ENCODE measurements at regions of chr6 and their contacts with region 1.

Region 1: DNA sequence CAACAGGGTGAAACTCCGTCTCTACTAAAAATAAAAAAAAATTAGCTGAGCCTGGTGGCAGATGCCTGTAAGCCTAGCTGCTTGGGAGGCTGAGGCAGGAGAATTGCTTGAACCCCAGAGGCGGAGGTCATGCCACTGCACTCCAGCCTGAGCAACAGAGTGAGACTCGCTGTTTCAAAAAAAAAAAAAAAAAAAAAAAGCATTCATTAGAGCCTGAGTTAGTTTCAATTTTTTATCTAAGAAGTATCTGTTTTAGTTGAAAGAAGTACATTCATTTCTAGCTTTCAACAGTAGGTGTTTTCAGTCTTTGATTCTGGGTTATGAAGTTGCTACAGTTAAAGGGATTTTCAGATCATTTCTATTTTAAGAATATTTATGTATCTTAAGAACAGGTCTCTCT is 42.2 kb downstream of the ZNF292 start:
- DNase-seq: peak; percentile 28
- ATAC-seq: peak; percentile 64
- H3K4me3 Mint-ChIP-seq: no peak overlapping the region
- H3K27ac Mint-ChIP-seq: no peak overlapping the region
- H3K4me1 Mint-ChIP-seq: peaks cover 81% of the 10 kb centered on the region
- H3K27me3 Mint-ChIP-seq: no peaks in the 10 kb centered on the region

Region 2: DNA sequence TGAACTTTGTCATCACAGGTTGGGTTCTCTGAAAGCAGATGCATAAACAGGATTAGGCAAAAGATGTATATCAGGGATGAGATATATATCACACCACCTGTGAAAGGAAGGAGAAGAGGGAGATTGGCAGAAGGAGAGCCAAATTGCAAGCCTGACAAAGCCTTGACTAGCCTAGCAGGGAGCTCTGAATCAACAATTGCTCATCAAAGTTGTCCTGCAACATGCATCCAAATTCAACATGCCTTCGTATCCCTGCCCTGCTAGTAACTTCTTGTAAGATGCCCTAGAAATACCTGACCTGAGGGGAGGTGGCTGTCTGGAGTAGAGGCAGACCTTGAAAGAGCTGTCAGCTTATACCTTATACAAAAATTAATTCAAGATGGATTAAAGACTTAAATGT is 467.3 kb before region 1 on chr6:
- CTCF ChIA-PET with region 1: no interaction called
- POLR2A ChIA-PET with region 1: no interaction called
- intact Hi-C with region 1: no loop called
- DNase-seq: no peak
- ATAC-seq: no peak
- H3K4me3 Mint-ChIP-seq: no peak overlapping the region
- H3K27ac Mint-ChIP-seq: no peak overlapping the region
- H3K4me1 Mint-ChIP-seq: no peaks in the 10 kb centered on the region
- H3K27me3 Mint-ChIP-seq: no peaks in the 10 kb centered on the region

Region 3: DNA sequence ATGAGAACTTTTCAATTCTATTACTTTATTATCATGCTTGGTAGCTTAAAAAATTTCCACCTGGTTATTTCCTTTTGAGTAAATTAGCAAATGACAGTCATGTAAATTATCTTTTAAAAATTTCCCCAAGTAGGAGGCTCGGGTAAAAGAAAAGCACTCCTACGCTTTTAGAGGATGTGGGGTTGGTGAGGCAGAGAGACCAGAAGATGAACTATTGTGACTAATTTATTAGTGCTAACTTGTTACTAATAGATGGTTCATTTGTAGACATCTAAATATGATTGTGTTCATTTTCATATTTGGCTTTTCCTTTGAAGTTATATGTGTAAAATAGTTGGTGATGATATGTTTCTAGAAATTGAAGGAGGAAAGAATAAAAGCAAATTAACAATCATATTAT is 15.2 kb before region 1 on chr6:
- CTCF ChIA-PET with region 1: interaction called, 3 read pairs
- POLR2A ChIA-PET with region 1: no interaction called
- intact Hi-C with region 1: loop called (anchors 1 kb)
- DNase-seq: peak; percentile 35
- ATAC-seq: peak; percentile 65
- H3K4me3 Mint-ChIP-seq: peak overlapping the region; percentile 15
- H3K27ac Mint-ChIP-seq: peak overlapping the region; percentile 81
- H3K4me1 Mint-ChIP-seq: peaks cover 84% of the 10 kb centered on the region
- H3K27me3 Mint-ChIP-seq: no peaks in the 10 kb centered on the region

Measured in activated CD4-positive, alpha-beta T cell treated with anti-CD3 and anti-CD28 coated beads for 36 hours (primary cell).